B cell (primary cell): ENCODE measurements at regions of chr1 and their contacts with region 1.

Region 1: GRCh38 chr1:45303582-45304310 is 22.9 kb upstream of the HPDL start:
- DNase-seq: peak; percentile 98
- ATAC-seq: peak; percentile 84
- H3K4me3 ChIP-seq: peak overlapping the region; percentile 47 to 87 (median 82)
- H3K4me3 Mint-ChIP-seq: peak overlapping the region; percentile 94
- H3K27ac ChIP-seq: peak overlapping the region; percentile 85 to 97
- H3K27ac Mint-ChIP-seq: peak overlapping the region; percentile 95
- H3K4me1 ChIP-seq: peaks cover 19 to 27% of the 10 kb centered on the region in 2 donors
- H3K4me1 Mint-ChIP-seq: peaks cover 34% of the 10 kb centered on the region
- H3K27me3 ChIP-seq: no peaks in the 10 kb centered on the region
- H3K27me3 Mint-ChIP-seq: no peaks in the 10 kb centered on the region
- CTCF ChIP-seq: peak; percentile 74

Region 2: GRCh38 chr1:44730741-44731512 is 572.8 kb before region 1 on chr1 and contains the start of gene RNU5D-1:
- CTCF ChIA-PET with region 1: interaction called, 8 read pairs
- POLR2A ChIA-PET with region 1: interaction called, 7 read pairs
- intact Hi-C with region 1: loop called (anchors 1 kb)
- DNase-seq: peak; percentile 97
- ATAC-seq: peak; percentile 74
- H3K4me3 ChIP-seq: peak within 1 kb of the TSS; percentile 17 to 68 (median 50)
- H3K4me3 Mint-ChIP-seq: peak within 1 kb of the TSS; percentile 92
- H3K27ac ChIP-seq: peak within 1 kb of the TSS; percentile 93 to 96
- H3K27ac Mint-ChIP-seq: peak within 1 kb of the TSS; percentile 100
- H3K4me1 ChIP-seq: peaks cover 12 to 24% of the 10 kb centered on the region in 2 donors
- H3K4me1 Mint-ChIP-seq: peaks cover 24% of the 10 kb centered on the region
- H3K27me3 ChIP-seq: no peaks in the 10 kb centered on the region
- H3K27me3 Mint-ChIP-seq: no peaks in the 10 kb centered on the region
- CTCF ChIP-seq: peak; percentile 87
- total RNA-seq, gene RNU5D-1: not detected in 2 replicates

Region 3: GRCh38 chr1:44792783-44793714 is 510.7 kb before region 1 on chr1:
- CTCF ChIA-PET with region 1: interaction called, 11 read pairs
- POLR2A ChIA-PET with region 1: no interaction called
- intact Hi-C with region 1: no loop called
- DNase-seq: no peak
- ATAC-seq: no peak
- H3K4me3 ChIP-seq: no peak overlapping the region
- H3K4me3 Mint-ChIP-seq: no peak overlapping the region
- H3K27ac ChIP-seq: no peak overlapping the region
- H3K27ac Mint-ChIP-seq: no peak overlapping the region
- H3K4me1 ChIP-seq: no peaks in the 10 kb centered on the region
- H3K4me1 Mint-ChIP-seq: no peaks in the 10 kb centered on the region
- H3K27me3 ChIP-seq: no peaks in the 10 kb centered on the region
- H3K27me3 Mint-ChIP-seq: no peaks in the 10 kb centered on the region
- CTCF ChIP-seq: no peak

Region 4: GRCh38 chr1:44985747-44986359 is 317.9 kb before region 1 on chr1:
- CTCF ChIA-PET with region 1: interaction called, 3 read pairs
- POLR2A ChIA-PET with region 1: interaction called, 9 read pairs
- intact Hi-C with region 1: loop called (anchors 1 kb)
- DNase-seq: no peak
- ATAC-seq: no peak
- H3K4me3 ChIP-seq: peak overlapping the region; percentile 80 to 91 (median 87)
- H3K4me3 Mint-ChIP-seq: peak overlapping the region; percentile 100
- H3K27ac ChIP-seq: peak overlapping the region; percentile 34 to 66
- H3K27ac Mint-ChIP-seq: peak overlapping the region; percentile 86
- H3K4me1 ChIP-seq: peaks cover 9 to 19% of the 10 kb centered on the region in 2 donors
- H3K4me1 Mint-ChIP-seq: peaks cover 18% of the 10 kb centered on the region
- H3K27me3 ChIP-seq: no peaks in the 10 kb centered on the region
- H3K27me3 Mint-ChIP-seq: no peaks in the 10 kb centered on the region
- CTCF ChIP-seq: no peak

Region 5: GRCh38 chr1:45326627-45327623 is 23.2 kb after region 1 on chr1 and contains the start of gene HPDL:
- CTCF ChIA-PET with region 1: interaction called, 7 read pairs
- POLR2A ChIA-PET with region 1: interaction called, 9 read pairs
- intact Hi-C with region 1: loop called (anchors 1 kb)
- DNase-seq: peak; percentile 74
- ATAC-seq: peak; percentile 88
- H3K4me3 ChIP-seq: peak within 1 kb of the TSS; percentile 47 to 70 (median 63)
- H3K4me3 Mint-ChIP-seq: peak within 1 kb of the TSS; percentile 89
- H3K27ac ChIP-seq: no peak within 1 kb of the TSS
- H3K27ac Mint-ChIP-seq: peak within 1 kb of the TSS; percentile 15
- H3K4me1 ChIP-seq: peaks cover 8 to 20% of the 10 kb centered on the region in 2 donors
- H3K4me1 Mint-ChIP-seq: peaks cover 13% of the 10 kb centered on the region
- H3K27me3 ChIP-seq: peaks cover 0 to 5% (median 2%) of the 10 kb centered on the region in 4 experiments
- H3K27me3 Mint-ChIP-seq: no peaks in the 10 kb centered on the region
- CTCF ChIP-seq: no peak
- total RNA-seq, gene HPDL: 0.79 and 0.85 TPM in 2 replicates

Region 6: GRCh38 chr1:45499415-45499769 is 195.6 kb after region 1 on chr1:
- CTCF ChIA-PET with region 1: interaction called, 41 read pairs
- POLR2A ChIA-PET with region 1: interaction called, 14 read pairs
- intact Hi-C with region 1: loop called (anchors 1 kb)
- DNase-seq: no peak
- ATAC-seq: no peak
- H3K4me3 ChIP-seq: peak overlapping the region; percentile 68 to 89 (median 74)
- H3K4me3 Mint-ChIP-seq: peak overlapping the region; percentile 96
- H3K27ac ChIP-seq: peak overlapping the region; percentile 52 to 67
- H3K27ac Mint-ChIP-seq: peak overlapping the region; percentile 80
- H3K4me1 ChIP-seq: peaks cover 12 to 22% of the 10 kb centered on the region in 2 donors
- H3K4me1 Mint-ChIP-seq: peaks cover 28% of the 10 kb centered on the region
- H3K27me3 ChIP-seq: no peaks in the 10 kb centered on the region
- H3K27me3 Mint-ChIP-seq: no peaks in the 10 kb centered on the region
- CTCF ChIP-seq: no peak